ENCODE measurements at regions of chr7 and their contacts with region 1.

Region 1: GRCh38 chr7:140003913-140004382 is 58.8 kb downstream of the PARP12 start:
- DNase-seq: peak; percentile 75
- ATAC-seq: peak; percentile 49
- H3K4me3 ChIP-seq: no peak overlapping the region
- H3K27ac ChIP-seq: no peak overlapping the region
- H3K4me1 ChIP-seq: peaks cover 2% of the 10 kb centered on the region; the same call in 1 of the 2 replicates
- H3K27me3 ChIP-seq: no peaks in the 10 kb centered on the region
- CTCF ChIP-seq: peak; percentile 79
- POLR2A ChIP-seq: no peak
- RAD21 ChIP-seq: peak; percentile 81

Region 2: GRCh38 chr7:139431010-139431409 is 572.9 kb before region 1 on chr7:
- CTCF ChIA-PET with region 1: interaction called, 4 read pairs
- POLR2A ChIA-PET with region 1: no interaction called
- dilution Hi-C with region 1: no loop called
- in situ Hi-C with region 1: loop called (anchors 10 kb)
- intact Hi-C with region 1: loop called (anchors 1 kb)
- DNase-seq: no peak
- ATAC-seq: no peak
- H3K4me3 ChIP-seq: no peak overlapping the region
- H3K27ac ChIP-seq: no peak overlapping the region
- H3K4me1 ChIP-seq: no peaks in the 10 kb centered on the region; the same call in 1 of the 2 replicates
- H3K27me3 ChIP-seq: no peaks in the 10 kb centered on the region
- CTCF ChIP-seq: no peak
- POLR2A ChIP-seq: no peak
- RAD21 ChIP-seq: no peak

Region 3: GRCh38 chr7:139502226-139502625 is 501.7 kb before region 1 on chr7:
- CTCF ChIA-PET with region 1: interaction called, 4 read pairs
- POLR2A ChIA-PET with region 1: no interaction called
- dilution Hi-C with region 1: no loop called
- in situ Hi-C with region 1: loop called (anchors 5 kb)
- intact Hi-C with region 1: loop called (anchors 1 kb)
- DNase-seq: no peak
- ATAC-seq: no peak
- H3K4me3 ChIP-seq: no peak overlapping the region
- H3K27ac ChIP-seq: no peak overlapping the region
- H3K4me1 ChIP-seq: no peaks in the 10 kb centered on the region
- H3K27me3 ChIP-seq: peaks cover 19% of the 10 kb centered on the region
- CTCF ChIP-seq: no peak
- POLR2A ChIP-seq: no peak
- RAD21 ChIP-seq: no peak

Region 4: DNA sequence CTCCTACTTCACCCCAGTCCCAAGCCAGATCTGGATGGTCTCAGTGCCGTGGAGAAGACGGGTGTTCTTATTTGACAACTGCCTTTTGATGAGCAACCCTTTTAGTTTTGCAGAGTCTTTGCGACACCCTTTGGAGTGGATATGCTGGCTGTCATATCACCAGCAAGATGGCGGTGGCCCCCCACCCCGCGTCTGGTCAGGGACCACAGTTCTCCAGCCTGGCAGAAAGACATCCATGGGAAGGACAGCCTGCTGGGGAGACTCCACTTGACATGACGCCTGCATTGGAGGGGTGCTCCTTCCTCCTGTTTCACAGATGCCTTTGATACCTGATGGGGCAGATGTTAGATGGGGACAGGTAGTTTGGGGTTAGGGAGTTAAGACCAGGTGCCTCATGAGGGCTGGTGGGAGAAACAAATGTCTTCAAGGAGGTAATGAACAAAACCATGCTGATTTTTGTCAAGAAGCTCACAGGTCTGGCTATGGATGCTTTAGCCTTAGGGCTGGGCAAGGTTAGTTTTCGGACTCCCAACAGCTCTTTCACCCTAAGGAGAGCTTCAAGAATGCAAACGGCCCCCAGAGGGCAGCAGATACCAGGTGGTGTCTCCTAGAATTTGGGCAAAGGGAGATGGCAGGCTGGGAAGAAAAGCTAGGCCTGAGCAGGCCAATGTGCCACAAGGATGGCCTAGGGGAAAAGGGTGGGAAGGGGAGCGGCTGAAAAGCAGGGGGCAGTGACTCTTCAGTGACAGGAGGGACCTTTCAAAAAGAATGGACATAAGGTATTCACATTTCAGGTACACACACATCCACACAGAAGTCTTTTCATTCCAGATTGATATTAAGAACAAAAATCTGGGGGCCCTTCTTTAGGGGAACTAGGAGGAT is 385.2 kb before region 1 on chr7:
- CTCF ChIA-PET with region 1: interaction called, 4 read pairs
- POLR2A ChIA-PET with region 1: no interaction called
- dilution Hi-C with region 1: no loop called
- in situ Hi-C with region 1: no loop called
- intact Hi-C with region 1: loop called (anchors 1 kb)
- DNase-seq: peak; percentile 41
- ATAC-seq: peak; percentile 54
- H3K4me3 ChIP-seq: no peak overlapping the region
- H3K27ac ChIP-seq: 0 out of 2 replicates have a peak overlapping the region, but pooled peaks have one; percentile 6
- H3K4me1 ChIP-seq: peaks cover 6% of the 10 kb centered on the region
- H3K27me3 ChIP-seq: no peaks in the 10 kb centered on the region
- CTCF ChIP-seq: peak; percentile 48
- POLR2A ChIP-seq: no peak
- RAD21 ChIP-seq: peak; percentile 64

Region 5: DNA sequence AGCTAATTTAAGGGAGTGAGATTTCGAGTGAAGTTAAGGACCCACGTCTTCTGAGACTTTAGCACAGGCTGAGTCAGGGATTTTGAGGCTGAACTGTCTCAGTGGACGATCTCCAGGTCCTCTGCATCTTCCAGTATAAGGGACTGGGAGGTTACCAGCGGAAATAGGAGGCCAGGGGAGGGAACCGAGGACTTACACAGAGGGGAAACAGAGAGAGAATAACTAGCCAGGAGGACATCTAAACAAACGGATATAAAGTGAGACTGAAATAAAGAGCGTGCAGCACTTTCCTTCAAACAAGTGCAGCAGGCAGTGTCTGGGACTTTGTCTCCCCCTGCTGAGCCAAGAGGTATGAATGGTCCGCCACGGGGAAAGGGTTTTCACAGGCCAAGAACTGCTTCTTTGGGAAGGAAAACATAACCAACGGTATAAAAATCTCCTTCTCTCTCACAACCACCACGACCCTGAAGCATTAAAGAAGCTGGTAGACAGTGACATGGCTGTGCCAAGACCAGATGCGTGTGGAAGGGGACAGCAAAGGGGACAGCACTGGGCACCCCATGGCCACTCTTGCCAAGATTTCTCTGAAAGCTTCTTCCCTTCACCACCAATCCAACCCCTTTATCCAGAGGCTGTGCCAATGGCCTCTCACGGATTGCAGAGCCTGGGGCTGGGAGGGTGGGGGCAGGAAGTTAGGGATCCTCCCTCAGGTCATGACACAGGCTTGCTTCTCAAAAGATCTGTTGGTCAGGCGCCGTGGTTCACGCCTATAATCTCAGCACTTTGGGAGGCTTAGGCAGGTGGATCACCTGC is 322.4 kb after region 1 on chr7:
- CTCF ChIA-PET with region 1: interaction called, 4 read pairs
- POLR2A ChIA-PET with region 1: no interaction called
- dilution Hi-C with region 1: no loop called
- in situ Hi-C with region 1: no loop called
- intact Hi-C with region 1: loop called (anchors 1 kb)
- DNase-seq: peak; percentile 73
- ATAC-seq: peak; percentile 99
- H3K4me3 ChIP-seq: no peak overlapping the region
- H3K27ac ChIP-seq: no peak overlapping the region
- H3K4me1 ChIP-seq: no peaks in the 10 kb centered on the region
- H3K27me3 ChIP-seq: no peaks in the 10 kb centered on the region
- CTCF ChIP-seq: peak; percentile 92
- POLR2A ChIP-seq: peak; percentile 46; the same call in 1 of the 2 replicates
- RAD21 ChIP-seq: peak; percentile 92

Measured in IMR-90 (cell line).